ENCODE measurements at regions of chr18 and their contacts with region 1.

Region 1: GRCh38 chr18:32258558-32259204 is 68.8 kb downstream of the MEP1B start:
- DNase-seq: no peak
- H3K4me3 ChIP-seq: no peak overlapping the region
- H3K27ac ChIP-seq: no peak overlapping the region
- H3K4me1 ChIP-seq: no peaks in the 10 kb centered on the region
- H3K27me3 ChIP-seq: no peaks in the 10 kb centered on the region
- CTCF ChIP-seq: no peak

Region 2: DNA sequence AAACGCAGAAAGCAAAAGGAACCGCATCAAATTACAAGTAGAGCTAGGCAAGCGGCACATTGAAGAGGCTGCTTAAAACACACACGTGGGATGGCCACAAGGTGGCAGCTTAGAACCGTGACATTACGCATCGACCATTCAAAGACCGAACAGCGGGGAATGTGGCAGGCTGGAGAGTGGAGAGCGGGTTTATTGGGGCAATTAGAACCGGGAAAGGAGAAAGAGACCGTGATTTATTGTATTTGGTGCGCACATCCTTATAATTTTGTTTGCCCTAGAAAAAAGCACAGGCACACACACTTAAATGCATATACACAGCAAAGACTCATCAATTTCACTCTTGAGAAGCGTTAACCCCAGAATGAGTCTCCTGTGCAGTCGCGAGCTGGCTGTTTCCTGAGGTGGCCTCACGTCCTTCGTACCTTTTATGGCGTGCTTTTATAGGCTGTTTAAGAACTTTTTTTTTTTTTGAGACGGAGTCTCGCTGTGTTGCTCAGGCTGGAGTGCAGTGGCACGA is 100.5 kb before region 1 on chr18:
- CTCF ChIA-PET with region 1: interaction called, 18 read pairs
- dilution Hi-C with region 1: no loop called
- in situ Hi-C with region 1: loop called in 1 of 2 experiments (anchors 25 kb)
- intact Hi-C with region 1: no loop called
- DNase-seq: peak; percentile 71
- H3K4me3 ChIP-seq: peak overlapping the region in 1 of 3 experiments; percentile 31
- H3K27ac ChIP-seq: no peak overlapping the region
- H3K4me1 ChIP-seq: peaks cover 5% of the 10 kb centered on the region
- H3K27me3 ChIP-seq: no peaks in the 10 kb centered on the region
- CTCF ChIP-seq: peak; percentile 76 to 78

Region 3: DNA sequence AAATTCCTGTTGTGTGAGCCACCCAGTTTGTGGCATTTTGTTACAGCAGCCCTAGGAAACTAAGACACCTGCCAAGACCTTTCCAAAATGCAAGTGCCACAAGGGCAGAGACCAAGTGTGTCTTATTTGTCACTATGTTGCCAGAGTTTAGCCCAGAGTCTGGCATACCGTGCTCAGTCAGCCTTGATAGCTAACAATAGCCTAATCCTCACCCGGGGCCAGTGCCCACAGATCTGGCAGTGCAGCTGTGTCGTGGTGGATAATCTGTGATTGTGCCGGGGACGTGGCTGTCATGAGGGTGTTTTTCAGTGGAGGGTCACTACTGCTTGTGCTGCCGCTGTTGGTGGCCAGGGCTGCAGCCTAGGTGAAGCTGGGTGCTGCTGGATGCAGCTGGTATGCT is 15.3 kb before region 1 on chr18:
- CTCF ChIA-PET with region 1: interaction called, 13 read pairs
- dilution Hi-C with region 1: no loop called
- in situ Hi-C with region 1: no loop called
- intact Hi-C with region 1: no loop called
- DNase-seq: no peak
- H3K4me3 ChIP-seq: no peak overlapping the region
- H3K27ac ChIP-seq: no peak overlapping the region
- H3K4me1 ChIP-seq: no peaks in the 10 kb centered on the region
- H3K27me3 ChIP-seq: no peaks in the 10 kb centered on the region
- CTCF ChIP-seq: no peak